ENCODE measurements at regions of chr17 and their contacts with region 1.

Region 1: GRCh38 chr17:44218344-44219107 is 949 bp downstream of the UBTF start:
- DNase-seq: peak; percentile 91
- H3K4me3 Mint-ChIP-seq: peak overlapping the region; percentile 98
- H3K27ac Mint-ChIP-seq: peak overlapping the region; percentile 94
- H3K4me1 Mint-ChIP-seq: peaks cover 40% of the 10 kb centered on the region
- H3K27me3 Mint-ChIP-seq: no peaks in the 10 kb centered on the region

Region 2: GRCh38 chr17:44141717-44142285 is 76.7 kb before region 1 on chr17 and contains the start of gene HROB:
- CTCF ChIA-PET with region 1: interaction called, 3 read pairs
- POLR2A ChIA-PET with region 1: interaction called, 4 read pairs
- intact Hi-C with region 1: loop called (anchors 2 kb)
- DNase-seq: peak; percentile 99
- H3K4me3 Mint-ChIP-seq: peak within 1 kb of the TSS; percentile 87
- H3K27ac Mint-ChIP-seq: peak within 1 kb of the TSS; percentile 89
- H3K4me1 Mint-ChIP-seq: peaks cover 24% of the 10 kb centered on the region
- H3K27me3 Mint-ChIP-seq: peaks cover 4% of the 10 kb centered on the region
- total RNA-seq, gene HROB: 17.9 to 19.8 TPM

Region 3: DNA sequence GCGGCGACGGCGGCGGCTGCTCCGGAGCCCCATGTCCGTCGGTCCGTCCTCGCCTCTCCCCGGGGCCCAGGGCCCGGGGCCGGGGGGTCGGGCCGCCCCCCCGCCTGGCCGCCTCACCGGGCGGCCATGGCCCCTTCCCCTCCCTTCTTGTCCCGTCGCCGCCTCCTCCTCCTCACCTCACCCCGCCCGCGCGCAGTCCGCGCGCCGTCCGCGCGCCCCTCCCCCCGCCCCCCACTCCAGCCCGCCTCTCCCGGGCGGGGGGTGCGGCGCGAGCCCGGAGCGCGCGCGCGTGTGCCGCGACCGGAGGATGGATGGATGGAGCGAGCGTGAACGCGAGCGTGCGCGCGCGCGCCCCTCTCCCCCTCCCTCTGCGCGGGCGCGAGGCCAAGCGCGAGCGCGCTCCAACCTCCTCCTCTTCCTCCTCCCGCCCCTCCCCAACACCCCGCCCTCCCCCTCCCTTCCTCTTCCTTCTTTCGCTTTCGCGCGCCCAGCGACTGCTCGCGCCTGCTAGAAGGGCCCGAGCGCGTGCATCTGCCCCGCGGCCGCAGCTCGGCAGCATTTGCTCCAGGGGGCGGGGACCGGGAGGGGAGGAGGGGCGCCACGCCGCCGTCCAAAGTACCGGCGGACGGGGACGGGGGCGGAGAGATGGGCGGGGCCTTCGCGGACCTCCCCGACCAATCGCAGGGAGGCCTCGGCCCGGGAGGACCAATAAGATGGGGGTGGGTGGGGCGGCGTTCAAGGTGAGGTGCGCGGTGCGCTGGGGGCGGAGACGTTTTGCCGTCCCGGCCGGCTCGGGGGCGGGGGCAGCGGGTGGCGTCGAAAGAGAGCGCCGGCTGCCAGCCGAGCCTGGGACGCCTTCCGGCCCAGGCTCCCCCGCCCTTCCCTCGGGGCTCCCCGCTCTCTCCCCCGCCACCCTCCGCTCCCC is 18.7 kb before region 1 on chr17 and contains the start of gene ATXN7L3:
- CTCF ChIA-PET with region 1: interaction called, 20 read pairs
- POLR2A ChIA-PET with region 1: interaction called, 10 read pairs
- intact Hi-C with region 1: loop called (anchors 1 kb)
- DNase-seq: peak; percentile 100
- H3K4me3 Mint-ChIP-seq: peak within 1 kb of the TSS; percentile 91
- H3K27ac Mint-ChIP-seq: peak within 1 kb of the TSS; percentile 92
- H3K4me1 Mint-ChIP-seq: peaks cover 41% of the 10 kb centered on the region
- H3K27me3 Mint-ChIP-seq: no peaks in the 10 kb centered on the region
- total RNA-seq, gene ATXN7L3: 63.4 to 69.7 TPM